Caco-2 (cell line): ENCODE measurements at regions of chr13 and their contacts with region 1.

Region 1: GRCh38 chr13:26186118-26186870 is 35.8 kb downstream of the RNF6 start:
- DNase-seq: peak; percentile 97
- H3K4me3 ChIP-seq: peak overlapping the region; percentile 88
- H3K4me3 Mint-ChIP-seq: peak overlapping the region; percentile 97
- H3K27ac Mint-ChIP-seq: peak overlapping the region; percentile 77
- H3K4me1 ChIP-seq: no peaks in the 10 kb centered on the region
- H3K4me1 Mint-ChIP-seq: no peaks in the 10 kb centered on the region
- H3K27me3 ChIP-seq: no peaks in the 10 kb centered on the region
- H3K27me3 Mint-ChIP-seq: no peaks in the 10 kb centered on the region
- CTCF ChIP-seq: peak; percentile 70 to 95

Region 2: GRCh38 chr13:26221721-26222519 is 35.6 kb after region 1 on chr13 and contains the start of gene RNF6:
- CTCF ChIA-PET with region 1: interaction called, 4 read pairs
- POLR2A ChIA-PET with region 1: interaction called, 5 read pairs
- intact Hi-C with region 1: loop called (anchors 1 kb)
- DNase-seq: peak; percentile 95 to 98
- H3K4me3 ChIP-seq: peak within 1 kb of the TSS; percentile 79
- H3K4me3 Mint-ChIP-seq: peak within 1 kb of the TSS; percentile 95
- H3K27ac Mint-ChIP-seq: peak within 1 kb of the TSS; percentile 94
- H3K4me1 ChIP-seq: peaks cover 8% of the 10 kb centered on the region
- H3K4me1 Mint-ChIP-seq: peaks cover 11% of the 10 kb centered on the region
- H3K27me3 ChIP-seq: no peaks in the 10 kb centered on the region
- H3K27me3 Mint-ChIP-seq: no peaks in the 10 kb centered on the region
- CTCF ChIP-seq: no peak
- total RNA-seq, gene RNF6: 39.1 and 41.4 TPM in 2 replicates

Region 3: GRCh38 chr13:26377038-26377437 is 190.7 kb after region 1 on chr13:
- CTCF ChIA-PET with region 1: interaction called, 5 read pairs
- POLR2A ChIA-PET with region 1: no interaction called
- intact Hi-C with region 1: loop called (anchors 10 kb)
- DNase-seq: peak; percentile 43 to 57
- H3K4me3 ChIP-seq: no peak overlapping the region
- H3K4me3 Mint-ChIP-seq: no peak overlapping the region
- H3K27ac Mint-ChIP-seq: no peak overlapping the region
- H3K4me1 ChIP-seq: 0 out of 2 replicates have a peak, but pooled peaks cover 4% of the 10 kb centered on the region
- H3K4me1 Mint-ChIP-seq: no peaks in the 10 kb centered on the region
- H3K27me3 ChIP-seq: no peaks in the 10 kb centered on the region
- H3K27me3 Mint-ChIP-seq: no peaks in the 10 kb centered on the region
- CTCF ChIP-seq: peak; percentile 47 to 68

Region 4: DNA sequence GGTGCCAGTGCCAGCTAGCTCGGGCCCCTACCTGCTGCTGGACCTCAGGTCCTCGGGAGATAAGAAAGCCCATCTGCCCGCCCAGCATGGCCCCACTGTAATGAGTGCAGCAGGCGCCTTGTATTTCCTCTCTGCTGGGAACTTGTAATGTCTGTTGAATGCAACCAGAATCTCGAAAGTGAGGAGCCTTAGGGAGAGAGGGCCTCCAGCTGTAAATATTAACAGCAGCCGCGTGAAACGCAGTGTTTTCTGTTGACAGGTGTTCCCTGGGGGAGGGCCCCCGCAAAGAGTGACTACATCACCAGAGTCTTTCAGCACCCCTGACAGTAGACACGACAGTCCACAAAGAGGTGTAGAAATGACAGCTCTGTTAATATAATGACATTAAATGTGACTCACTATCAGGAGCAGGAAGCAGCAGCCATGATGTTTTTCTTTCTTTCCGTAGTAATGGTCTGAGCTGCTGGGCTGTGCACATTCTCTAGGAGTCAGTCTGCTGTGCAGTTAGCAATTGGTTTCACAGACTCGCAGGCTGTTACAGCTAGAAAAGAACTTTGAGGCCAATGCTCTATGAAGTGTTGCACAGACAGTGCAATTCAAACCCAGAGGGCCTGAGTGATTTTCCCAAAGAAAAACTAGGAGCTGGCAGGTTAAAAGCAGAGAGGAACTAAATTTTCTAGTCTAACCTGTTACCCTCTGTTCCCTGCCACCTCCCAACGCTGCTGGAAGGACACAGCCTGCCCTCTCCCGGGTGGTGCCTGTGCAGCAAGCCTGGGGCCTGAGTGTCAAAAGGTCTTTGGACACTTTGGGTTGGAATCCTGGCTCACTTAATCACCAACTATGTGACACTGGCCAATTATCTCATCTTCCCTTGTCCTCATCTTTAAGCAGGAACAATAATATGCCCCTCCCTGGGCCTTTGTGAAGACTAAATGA is 312.6 kb after region 1 on chr13:
- CTCF ChIA-PET with region 1: interaction called, 111 read pairs
- POLR2A ChIA-PET with region 1: interaction called, 3 read pairs
- intact Hi-C with region 1: loop called (anchors 1 kb)
- DNase-seq: peak; percentile 51 to 57
- H3K4me3 ChIP-seq: no peak overlapping the region
- H3K4me3 Mint-ChIP-seq: no peak overlapping the region
- H3K27ac Mint-ChIP-seq: no peak overlapping the region
- H3K4me1 ChIP-seq: no peaks in the 10 kb centered on the region
- H3K4me1 Mint-ChIP-seq: no peaks in the 10 kb centered on the region
- H3K27me3 ChIP-seq: no peaks in the 10 kb centered on the region
- H3K27me3 Mint-ChIP-seq: peaks cover 4% of the 10 kb centered on the region
- CTCF ChIP-seq: peak; percentile 12 to 50

Region 5: DNA sequence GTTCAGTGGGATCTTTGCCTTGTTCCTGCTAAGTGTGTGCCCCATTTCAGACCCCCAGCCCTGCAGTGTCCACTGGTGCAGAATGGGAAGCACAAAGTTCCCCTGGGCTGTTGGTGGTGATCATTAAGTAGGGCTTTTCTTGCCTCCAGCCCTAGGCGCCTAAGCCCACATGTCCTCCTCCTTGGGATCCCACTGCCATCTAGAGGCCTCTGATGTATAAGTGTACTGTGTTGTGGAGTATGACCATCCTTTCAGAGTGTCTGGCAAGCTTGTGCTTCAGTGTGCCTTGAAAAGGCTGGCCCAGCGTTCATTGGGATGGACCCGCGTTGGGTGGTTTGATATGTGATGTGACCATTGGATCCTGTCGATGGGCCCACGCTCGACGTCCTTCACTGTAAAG is 442.4 kb after region 1 on chr13:
- CTCF ChIA-PET with region 1: interaction called, 9 read pairs
- POLR2A ChIA-PET with region 1: no interaction called
- intact Hi-C with region 1: loop called (anchors 2 kb)
- DNase-seq: peak in 1 of 2 experiments; percentile 42
- H3K4me3 ChIP-seq: no peak overlapping the region
- H3K4me3 Mint-ChIP-seq: no peak overlapping the region
- H3K27ac Mint-ChIP-seq: no peak overlapping the region
- H3K4me1 ChIP-seq: no peaks in the 10 kb centered on the region
- H3K4me1 Mint-ChIP-seq: no peaks in the 10 kb centered on the region
- H3K27me3 ChIP-seq: no peaks in the 10 kb centered on the region
- H3K27me3 Mint-ChIP-seq: peaks cover 8% of the 10 kb centered on the region
- CTCF ChIP-seq: peak in 1 of 2 experiments; percentile 29